Sciatic nerve (tissue), 2 donors: ENCODE measurements at regions of chr20 and their contacts with region 1.

Region 1: DNA sequence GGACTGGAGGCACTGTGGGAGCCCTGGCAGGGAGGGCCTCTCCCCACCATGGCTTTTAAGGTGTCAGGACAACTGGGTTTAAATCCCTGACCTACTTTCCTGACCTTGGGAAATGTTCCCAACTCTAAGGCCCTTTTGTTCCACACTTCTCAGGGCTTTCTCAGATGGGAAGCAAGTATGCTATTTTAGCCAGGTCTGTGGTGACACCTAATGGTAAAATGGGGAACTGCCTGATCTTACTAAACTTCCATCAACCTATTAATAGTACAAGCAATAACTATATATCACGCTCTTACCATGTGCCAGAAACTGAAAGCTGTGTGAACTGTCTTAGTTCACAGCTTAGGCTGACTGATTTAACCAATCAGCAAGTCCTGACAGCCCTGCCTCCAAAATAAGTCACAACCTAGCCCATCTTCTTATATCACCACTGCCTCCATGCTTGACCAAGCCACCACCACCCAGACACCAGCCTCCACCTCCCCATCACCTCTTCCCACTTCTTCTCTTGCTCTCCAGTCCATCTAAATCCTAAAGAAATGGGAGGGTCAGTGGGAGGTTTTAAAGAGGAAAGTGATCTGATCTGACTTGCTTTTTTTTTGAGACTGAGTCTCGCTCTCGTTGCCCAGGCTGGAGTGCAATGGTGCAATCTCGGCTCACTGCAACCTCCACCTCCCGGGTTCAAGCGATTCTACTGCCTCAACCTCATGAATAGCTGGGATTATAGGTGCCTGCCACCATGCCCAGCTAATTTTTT is 6.9 kb upstream of the BLCAP start:
- DNase-seq: peak; percentile 53
- ATAC-seq: peak; percentile 92

Region 2: GRCh38 chr20:37265152-37265551 is 269.4 kb before region 1 on chr20:
- intact Hi-C with region 1: loop called (anchors 5 kb)
- DNase-seq: no peak
- ATAC-seq: no peak

Region 3: GRCh38 chr20:37856932-37857660 is 322.5 kb after region 1 on chr20:
- intact Hi-C with region 1: no loop called
- DNase-seq: no peak
- ATAC-seq: no peak